Upper lobe of right lung (tissue), 1 donor: ENCODE measurements at regions of chr7 and their contacts with region 1.

Region 1: GRCh38 chr7:518630-519483 is 789 bp downstream of the PDGFA start:
- DNase-seq: peak; percentile 93
- ATAC-seq: peak; percentile 75
- H3K4me3 ChIP-seq: peak overlapping the region; percentile 57
- H3K27ac ChIP-seq: peak overlapping the region; percentile 72
- H3K4me1 ChIP-seq: peaks cover 39% of the 10 kb centered on the region
- H3K27me3 ChIP-seq: peaks cover 32% of the 10 kb centered on the region
- CTCF ChIP-seq: no peak

Region 2: GRCh38 chr7:332646-333392 is 186.0 kb before region 1 on chr7:
- intact Hi-C with region 1: loop called (anchors 5 kb)
- DNase-seq: peak; percentile 94
- ATAC-seq: peak; percentile 92
- H3K4me3 ChIP-seq: peak overlapping the region; percentile 46
- H3K27ac ChIP-seq: peak overlapping the region; percentile 70
- H3K4me1 ChIP-seq: peaks cover 15% of the 10 kb centered on the region
- H3K27me3 ChIP-seq: no peaks in the 10 kb centered on the region
- CTCF ChIP-seq: peak; percentile 91

Region 3: DNA sequence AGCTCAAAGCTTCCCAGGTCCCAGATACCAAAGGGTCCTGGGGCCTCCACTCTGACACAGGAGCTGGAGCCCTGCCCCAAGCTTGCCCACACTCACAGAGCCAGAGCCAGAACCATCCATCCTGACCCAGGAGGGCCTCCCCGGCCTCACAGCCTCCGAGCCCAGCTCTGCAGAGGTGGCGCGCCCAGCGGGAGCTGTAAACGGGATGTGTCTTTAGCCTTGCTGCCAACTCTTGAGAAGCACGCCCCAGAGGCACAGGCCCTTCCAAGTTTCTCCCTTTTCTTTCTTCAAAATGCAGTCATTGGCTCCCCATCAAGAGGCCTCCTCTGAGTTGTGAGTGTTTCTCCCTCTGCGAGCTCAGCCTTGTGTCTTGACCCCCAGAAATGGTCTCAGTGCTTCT is 74.3 kb before region 1 on chr7:
- intact Hi-C with region 1: no loop called
- DNase-seq: no peak
- ATAC-seq: no peak
- H3K4me3 ChIP-seq: no peak overlapping the region
- H3K27ac ChIP-seq: no peak overlapping the region
- H3K4me1 ChIP-seq: no peaks in the 10 kb centered on the region
- H3K27me3 ChIP-seq: no peaks in the 10 kb centered on the region
- CTCF ChIP-seq: no peak

Region 4: DNA sequence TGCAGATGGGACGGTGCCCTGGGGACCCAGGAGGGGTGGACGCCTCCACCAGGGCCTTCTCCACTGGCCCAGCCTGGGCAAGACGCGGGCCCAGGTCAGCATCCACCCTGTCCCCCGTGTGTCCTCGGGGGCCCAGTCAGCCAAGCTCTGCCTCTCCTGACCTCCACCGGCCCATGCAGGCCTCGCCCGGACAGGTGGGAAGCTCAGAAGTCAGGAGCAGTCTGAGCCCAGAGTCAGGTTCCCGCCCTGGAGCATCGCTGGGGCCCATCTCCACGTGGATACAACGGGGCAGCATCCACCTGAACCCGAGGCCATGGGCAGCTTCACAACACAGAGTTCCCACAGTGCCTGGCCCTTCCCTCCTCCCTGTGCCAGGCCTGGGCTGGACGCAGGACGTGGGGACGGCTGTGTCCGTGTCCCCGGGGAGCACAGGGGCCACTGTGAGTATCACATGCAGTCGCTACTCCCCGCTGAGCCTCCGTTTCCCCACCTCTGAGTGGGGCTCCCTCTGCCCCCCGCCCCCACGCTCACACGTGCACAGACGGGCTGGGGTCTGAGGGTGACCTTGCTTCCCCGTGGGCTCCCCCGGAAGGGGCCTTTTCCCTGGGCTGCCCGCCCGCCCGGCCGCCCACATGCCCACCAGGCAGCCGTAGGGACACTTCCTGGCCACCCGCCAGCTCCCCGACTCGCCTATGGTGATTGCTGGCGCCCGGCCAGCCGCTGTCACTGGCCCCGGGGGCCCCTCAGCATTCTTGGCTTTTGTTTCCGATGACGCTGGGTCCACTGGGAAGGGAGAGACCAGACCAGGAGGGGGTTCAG is 63.5 kb before region 1 on chr7:
- intact Hi-C with region 1: no loop called
- DNase-seq: no peak
- ATAC-seq: no peak
- H3K4me3 ChIP-seq: no peak overlapping the region
- H3K27ac ChIP-seq: no peak overlapping the region
- H3K4me1 ChIP-seq: peaks cover 18% of the 10 kb centered on the region
- H3K27me3 ChIP-seq: peaks cover 16% of the 10 kb centered on the region
- CTCF ChIP-seq: no peak

Region 5: GRCh38 chr7:842431-843031 is 323.7 kb after region 1 on chr7:
- intact Hi-C with region 1: no loop called
- DNase-seq: no peak
- ATAC-seq: no peak
- H3K4me3 ChIP-seq: no peak overlapping the region
- H3K27ac ChIP-seq: no peak overlapping the region
- H3K4me1 ChIP-seq: no peaks in the 10 kb centered on the region
- H3K27me3 ChIP-seq: no peaks in the 10 kb centered on the region
- CTCF ChIP-seq: no peak